Activated CD4-positive, alpha-beta T cell treated with anti-CD3 and anti-CD28 coated beads, Interleukin-2, amount 10 ng/mL, durations not matched to agents 7 days and 5 days (primary cell): ENCODE measurements at regions of chr7 and their contacts with region 1.

Region 1: GRCh38 chr7:30322271-30323005 is 38.0 kb downstream of the ZNRF2 start:
- DNase-seq: peak; percentile 39
- H3K4me3 Mint-ChIP-seq: peak overlapping the region; percentile 73
- H3K27ac Mint-ChIP-seq: peak overlapping the region; percentile 97
- H3K4me1 Mint-ChIP-seq: peaks cover 61% of the 10 kb centered on the region
- H3K27me3 Mint-ChIP-seq: no peaks in the 10 kb centered on the region

Region 2: DNA sequence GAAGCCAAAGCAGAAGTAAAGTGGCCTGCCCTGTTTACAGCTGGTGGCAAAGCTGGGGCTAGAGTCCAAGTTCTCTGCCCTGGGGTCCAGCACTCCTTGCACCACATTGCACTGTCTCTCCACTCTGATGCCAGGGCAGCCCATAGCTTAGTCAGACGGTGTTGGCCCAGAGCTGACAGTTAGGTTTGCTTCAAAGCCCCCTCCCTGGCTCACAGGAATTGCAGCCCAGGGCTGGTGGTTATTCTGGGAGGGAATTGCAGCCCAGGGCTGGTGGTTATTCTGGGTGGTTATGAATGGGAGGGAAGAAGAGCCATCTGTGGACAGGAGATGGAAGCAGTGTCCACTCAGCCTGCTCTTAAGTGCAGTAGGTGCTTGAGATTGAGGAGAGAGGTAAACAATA is 421.7 kb before region 1 on chr7:
- CTCF ChIA-PET with region 1: no interaction called
- POLR2A ChIA-PET with region 1: no interaction called
- DNase-seq: no peak
- H3K4me3 Mint-ChIP-seq: no peak overlapping the region
- H3K27ac Mint-ChIP-seq: no peak overlapping the region
- H3K4me1 Mint-ChIP-seq: no peaks in the 10 kb centered on the region
- H3K27me3 Mint-ChIP-seq: peaks cover 9% of the 10 kb centered on the region

Region 3: GRCh38 chr7:30206491-30206890 is 115.9 kb before region 1 on chr7:
- CTCF ChIA-PET with region 1: no interaction called
- POLR2A ChIA-PET with region 1: no interaction called
- DNase-seq: no peak
- H3K4me3 Mint-ChIP-seq: no peak overlapping the region
- H3K27ac Mint-ChIP-seq: no peak overlapping the region
- H3K4me1 Mint-ChIP-seq: no peaks in the 10 kb centered on the region
- H3K27me3 Mint-ChIP-seq: no peaks in the 10 kb centered on the region

Region 4: DNA sequence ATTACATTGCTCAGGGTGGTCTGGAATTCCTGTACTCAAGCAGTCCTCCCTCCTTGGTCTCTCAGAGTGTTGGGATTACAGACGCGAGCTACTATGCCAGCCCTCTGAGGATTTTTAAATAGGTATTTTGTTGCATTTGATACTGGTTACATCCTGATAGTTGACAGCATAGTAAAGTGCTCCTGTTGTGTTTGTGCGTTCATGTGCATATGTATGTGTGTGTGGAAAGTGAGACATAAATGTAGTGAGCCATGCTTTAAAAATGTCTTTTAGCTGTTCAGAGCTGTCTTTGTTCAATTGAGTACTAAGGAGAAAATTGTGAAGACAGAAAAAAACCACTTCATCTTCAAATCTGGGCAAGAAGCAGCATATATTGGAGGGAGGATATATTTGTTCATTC is 10.3 kb before region 1 on chr7:
- CTCF ChIA-PET with region 1: interaction called, 13 read pairs
- POLR2A ChIA-PET with region 1: no interaction called
- DNase-seq: no peak
- H3K4me3 Mint-ChIP-seq: no peak overlapping the region
- H3K27ac Mint-ChIP-seq: no peak overlapping the region
- H3K4me1 Mint-ChIP-seq: peaks cover 28% of the 10 kb centered on the region
- H3K27me3 Mint-ChIP-seq: no peaks in the 10 kb centered on the region